ENCODE measurements at regions of chr12 and their contacts with region 1.

Region 1: DNA sequence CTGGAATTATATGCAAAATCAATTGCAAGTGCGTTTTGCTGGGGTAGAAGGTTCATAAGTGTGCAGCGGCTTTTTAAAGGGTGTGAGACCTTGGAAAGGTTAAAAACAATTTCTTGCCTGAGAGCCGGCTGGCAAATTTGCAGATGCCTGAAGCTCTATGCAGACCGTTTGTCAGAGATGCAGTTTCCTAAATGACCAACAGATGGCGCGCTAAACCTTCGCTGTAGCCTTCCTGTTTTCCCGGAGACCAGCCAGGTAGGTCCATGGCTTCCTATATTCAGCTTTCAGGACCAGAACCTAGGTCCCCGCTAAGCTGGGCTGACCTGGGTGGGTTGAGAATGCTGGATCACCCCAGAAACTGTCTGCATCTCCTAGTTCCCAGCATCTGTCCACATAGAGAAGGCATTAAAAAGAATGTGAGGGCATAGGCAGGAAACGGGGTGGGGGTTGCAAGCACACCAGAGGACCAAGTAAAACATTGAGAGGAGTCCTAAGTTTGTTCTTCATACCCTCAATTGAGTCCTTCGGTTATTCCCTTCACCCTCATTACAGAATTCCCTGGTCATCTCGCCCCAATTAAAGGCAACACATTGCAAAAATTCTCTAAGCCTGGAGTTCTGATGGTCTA is 5.7 kb upstream of the NOS1 start:
- DNase-seq: peak; percentile 55
- ATAC-seq: peak; percentile 73 to 80
- H3K4me3 ChIP-seq: no peak overlapping the region
- H3K27ac ChIP-seq: no peak overlapping the region
- H3K4me1 ChIP-seq: no peaks in the 10 kb centered on the region
- H3K27me3 ChIP-seq: peaks cover 25% of the 10 kb centered on the region
- CTCF ChIP-seq: peak; percentile 92

Region 2: DNA sequence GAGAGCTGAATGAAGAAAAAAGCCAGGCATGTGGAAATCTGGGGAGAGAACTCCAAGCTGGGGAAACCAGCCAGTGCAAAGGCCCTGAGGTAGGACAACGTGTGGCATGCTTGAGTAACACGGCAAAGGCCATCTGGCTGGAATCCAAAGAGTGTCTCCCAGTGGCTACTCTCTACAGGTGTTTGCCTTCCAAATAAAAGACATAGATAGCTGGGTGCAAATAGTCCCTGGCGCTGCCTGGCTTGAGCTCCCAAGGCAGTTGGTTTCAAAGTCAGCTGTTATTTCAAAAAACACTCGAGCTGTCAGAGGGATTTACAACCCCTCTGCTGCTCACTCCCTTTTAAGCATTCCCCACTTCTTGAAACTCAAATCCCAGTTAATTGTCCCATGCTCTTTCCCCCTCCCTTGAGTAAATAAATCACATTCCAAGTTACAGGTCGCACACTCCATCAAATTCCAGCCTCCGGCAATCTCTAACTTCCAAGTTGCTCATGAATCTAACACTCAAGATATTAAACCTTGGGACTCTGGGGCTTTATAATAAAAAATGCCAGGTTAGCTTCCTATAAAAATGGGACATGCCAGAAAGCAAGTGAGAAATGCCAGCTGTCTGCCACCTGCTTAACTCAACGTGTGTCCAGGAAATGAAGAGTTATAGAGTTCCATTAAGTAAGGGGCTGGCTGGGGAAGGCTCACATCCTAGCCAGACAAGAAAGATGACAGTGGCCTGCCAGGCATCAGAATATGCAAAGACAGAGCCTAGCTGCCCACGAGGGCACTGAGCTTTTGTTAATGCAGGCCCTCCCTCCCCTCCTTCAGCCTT is 127.9 kb after region 1 on chr12:
- intact Hi-C with region 1: no loop called
- DNase-seq: no peak
- ATAC-seq: no peak
- H3K4me3 ChIP-seq: no peak overlapping the region
- H3K27ac ChIP-seq: no peak overlapping the region
- H3K4me1 ChIP-seq: peaks cover 7% of the 10 kb centered on the region
- H3K27me3 ChIP-seq: no peaks in the 10 kb centered on the region
- CTCF ChIP-seq: no peak

Region 3: GRCh38 chr12:117587631-117588287 is 220.6 kb after region 1 on chr12:
- intact Hi-C with region 1: loop called (anchors 5 kb)
- DNase-seq: peak; percentile 64
- ATAC-seq: peak; percentile 73 to 79
- H3K4me3 ChIP-seq: no peak overlapping the region
- H3K27ac ChIP-seq: no peak overlapping the region
- H3K4me1 ChIP-seq: no peaks in the 10 kb centered on the region
- H3K27me3 ChIP-seq: no peaks in the 10 kb centered on the region
- CTCF ChIP-seq: peak; percentile 85